PC-3 (cell line): ENCODE measurements at regions of chr20 and their contacts with region 1.

Region 1: DNA sequence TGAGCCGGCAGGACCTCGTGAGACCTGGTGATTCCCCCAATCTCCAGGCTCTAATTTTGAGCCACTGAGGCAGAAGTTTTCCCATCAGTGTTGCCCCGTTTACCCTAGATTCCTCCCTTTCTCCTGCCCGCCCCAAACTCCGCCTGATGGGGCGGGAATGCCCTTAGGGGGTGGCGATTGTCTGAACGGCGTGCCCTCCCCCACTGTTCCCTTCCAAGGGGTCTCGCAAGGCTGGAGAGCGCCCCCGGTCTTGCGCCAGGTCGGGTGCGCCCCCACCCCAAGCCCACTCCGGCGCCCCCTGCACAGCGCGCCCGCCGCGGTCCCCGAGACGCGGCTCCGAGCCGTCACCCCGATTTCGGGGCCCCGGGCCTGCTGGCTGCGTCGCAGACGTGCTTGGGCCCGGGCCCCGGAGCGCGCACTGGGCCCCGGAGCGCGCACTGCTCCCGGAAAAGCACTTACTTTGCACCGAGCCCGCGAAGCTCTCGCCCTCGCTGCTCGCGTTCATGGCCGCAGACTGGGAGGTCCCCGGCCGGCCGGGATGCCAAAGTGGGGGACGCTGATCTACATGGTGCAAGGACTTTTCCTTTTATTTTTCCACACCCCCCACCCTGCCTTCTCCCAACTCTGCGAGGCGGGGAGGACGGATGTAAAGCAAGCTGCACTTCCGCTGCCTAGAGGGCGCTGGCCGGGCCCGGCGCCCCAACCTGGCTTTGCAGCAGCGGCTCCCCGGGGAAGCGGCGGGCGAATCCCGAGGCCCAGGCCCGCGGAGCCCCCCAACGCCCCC is at the start of gene ZFP64:
- DNase-seq: peak; percentile 87
- ATAC-seq: peak; percentile 78
- H3K4me3 ChIP-seq: peak within 1 kb of the TSS; percentile 84
- H3K27ac ChIP-seq: peak within 1 kb of the TSS; percentile 34
- H3K4me1 ChIP-seq: peaks cover 20% of the 10 kb centered on the region
- H3K27me3 ChIP-seq: no peaks in the 10 kb centered on the region
- CTCF ChIP-seq: peak; percentile 86
- total RNA-seq, gene ZFP64: 16.2 and 16.6 TPM in 2 replicates

Region 2: DNA sequence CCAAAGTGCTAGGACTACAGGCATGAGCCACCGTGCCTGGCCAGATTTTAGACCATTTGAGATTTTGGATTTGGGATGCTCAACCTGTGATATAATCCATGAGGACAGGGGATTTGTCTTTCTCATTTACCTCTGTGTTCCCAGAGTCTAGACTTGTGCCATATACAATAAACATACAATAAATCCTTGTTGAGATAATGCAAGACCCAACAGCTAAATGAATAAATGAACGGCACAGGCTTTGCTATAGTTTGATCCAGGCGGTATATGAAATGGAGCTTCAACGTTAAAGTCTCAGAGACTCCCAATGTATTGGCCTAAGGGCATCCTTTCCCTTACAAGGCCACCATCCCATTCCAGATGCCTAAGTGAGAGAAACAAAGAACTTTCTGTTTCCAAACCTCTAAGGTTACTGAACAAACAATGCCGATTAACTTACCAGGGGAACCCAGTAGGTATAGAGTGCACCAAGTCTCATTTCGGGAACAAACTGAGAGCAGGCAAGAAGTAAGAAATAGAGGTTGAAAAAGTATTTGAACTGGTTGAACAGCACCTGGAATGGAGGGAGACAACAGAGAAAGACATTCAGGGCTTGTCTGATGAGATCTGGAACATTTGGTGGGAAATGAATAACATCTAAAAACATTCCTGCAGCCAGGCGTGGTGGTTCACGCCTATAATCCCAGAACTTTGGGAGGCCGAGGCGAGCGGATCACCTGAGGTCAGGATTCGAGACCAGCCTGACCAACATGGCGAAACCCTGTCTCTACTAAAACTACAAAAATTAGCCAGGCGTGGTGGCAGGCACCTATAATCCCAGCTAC is 465.7 kb before region 1 on chr20:
- CTCF ChIA-PET with region 1: no interaction called
- POLR2A ChIA-PET with region 1: interaction called, 13 read pairs
- intact Hi-C with region 1: no loop called
- DNase-seq: peak; percentile 98
- ATAC-seq: peak; percentile 99
- H3K4me3 ChIP-seq: no peak overlapping the region
- H3K27ac ChIP-seq: peak overlapping the region; percentile 76
- H3K4me1 ChIP-seq: peaks cover 39% of the 10 kb centered on the region
- H3K27me3 ChIP-seq: no peaks in the 10 kb centered on the region
- CTCF ChIP-seq: no peak